Activated CD4-positive, alpha-beta T cell treated with anti-CD3 and anti-CD28 coated beads, Interleukin-2, amount 10 ng/mL, durations not matched to agents 24 days and 14 days (primary cell): ENCODE measurements at regions of chr10 and their contacts with region 1.

Region 1: DNA sequence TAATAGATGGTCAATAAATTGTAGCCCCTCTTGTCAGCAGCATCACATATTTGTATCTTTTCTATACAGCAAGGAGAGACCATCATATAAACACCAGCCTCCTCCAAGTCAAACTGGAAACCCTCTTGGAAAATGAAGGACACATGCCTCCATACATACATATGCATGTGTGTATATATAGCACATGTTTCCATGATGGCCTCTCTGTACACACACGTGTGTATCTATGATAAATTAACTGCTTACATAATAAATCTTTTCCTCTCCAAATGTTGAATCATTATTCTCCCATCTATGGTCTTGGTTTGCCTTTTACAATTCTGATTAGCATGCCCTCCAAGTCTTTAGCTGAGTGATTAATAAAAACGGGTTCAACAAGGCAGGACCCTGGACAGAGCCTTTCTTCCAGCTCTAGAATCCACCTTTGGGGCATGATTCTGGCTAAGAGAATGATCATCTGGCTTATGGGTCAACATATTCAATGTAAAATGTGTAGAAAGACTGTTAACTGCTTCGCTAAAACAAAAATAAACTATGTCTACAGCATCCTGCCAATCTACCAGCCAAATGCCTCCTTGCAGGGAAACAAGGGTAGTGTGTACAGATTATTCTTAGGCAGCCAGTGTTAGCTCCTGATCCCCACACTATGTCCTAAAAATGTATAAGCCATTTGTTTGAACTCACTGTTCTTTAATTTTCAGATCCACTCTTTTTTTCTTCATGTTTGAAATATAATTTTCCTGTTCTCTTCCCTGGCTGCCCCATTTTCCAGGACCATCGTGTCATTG is 70.0 kb downstream of the CRTAC1 start:
- DNase-seq: no peak
- H3K4me3 Mint-ChIP-seq: no peak overlapping the region
- H3K27ac Mint-ChIP-seq: no peak overlapping the region
- H3K4me1 Mint-ChIP-seq: no peaks in the 10 kb centered on the region
- H3K27me3 Mint-ChIP-seq: peaks cover 9% of the 10 kb centered on the region

Region 2: DNA sequence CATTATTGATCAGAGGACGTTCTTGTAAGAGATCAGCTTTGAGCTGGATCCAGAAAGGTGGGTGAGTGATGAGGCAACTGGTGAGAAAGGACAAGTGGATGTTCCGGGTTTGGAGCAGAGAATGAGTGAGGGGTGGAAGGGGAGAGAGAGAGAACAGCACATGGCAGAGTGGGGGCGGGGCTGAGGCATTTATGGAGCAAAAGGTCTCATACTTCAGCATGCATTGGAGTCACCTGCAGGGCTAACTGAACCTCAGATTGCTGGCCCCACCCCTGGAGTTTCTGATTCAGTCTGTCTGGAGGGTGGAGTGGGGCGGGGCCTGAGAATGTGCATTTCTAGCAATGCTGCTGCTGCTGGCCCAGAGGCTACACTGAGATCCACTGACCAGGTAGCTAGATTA is 39.6 kb before region 1 on chr10:
- intact Hi-C with region 1: loop called (anchors 1 kb)
- DNase-seq: no peak
- H3K4me3 Mint-ChIP-seq: no peak overlapping the region
- H3K27ac Mint-ChIP-seq: no peak overlapping the region
- H3K4me1 Mint-ChIP-seq: no peaks in the 10 kb centered on the region
- H3K27me3 Mint-ChIP-seq: peaks cover 14% of the 10 kb centered on the region